Caco-2 (cell line): ENCODE measurements at regions of chr9 and their contacts with region 1.

Region 1: DNA sequence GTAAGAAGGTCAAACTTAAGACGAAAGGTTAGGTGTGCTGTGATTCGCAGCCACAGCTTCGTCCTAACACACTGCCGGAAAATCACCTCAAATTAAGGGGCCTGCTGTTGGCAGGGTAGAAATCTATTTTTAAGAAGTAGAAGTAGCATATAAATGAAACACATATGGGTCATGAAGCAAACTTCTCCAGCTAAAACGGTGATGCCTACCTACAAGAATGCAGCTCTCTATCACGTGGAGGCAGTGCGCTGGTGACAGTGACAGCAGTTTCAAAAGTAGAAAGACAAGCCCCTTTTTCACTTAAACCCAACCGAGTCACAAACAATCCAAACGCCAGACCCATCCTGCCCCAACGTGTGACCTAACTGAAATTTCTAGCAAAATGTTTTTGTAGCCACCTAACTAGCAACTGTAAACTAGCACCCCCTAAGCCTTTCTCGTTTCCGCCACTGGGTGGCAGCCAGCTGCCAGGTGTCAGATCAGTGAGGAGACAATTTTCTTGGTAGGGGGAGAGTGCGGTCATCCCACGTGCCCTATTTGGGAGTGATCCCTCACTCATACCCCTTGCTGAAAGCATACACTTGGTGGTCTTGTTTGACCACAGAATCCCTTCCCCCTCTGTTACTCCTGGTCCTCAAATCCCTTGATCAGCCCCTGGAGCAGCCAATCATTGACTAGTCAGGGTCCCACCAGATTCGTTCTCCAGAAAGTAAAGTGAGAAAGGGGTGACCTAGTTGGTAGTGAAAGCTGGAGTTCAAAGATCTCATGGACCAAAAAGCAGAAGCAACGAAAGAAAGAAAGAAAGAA is 71.8 kb upstream of the MAMDC2 start:
- DNase-seq: peak; percentile 25 to 39
- H3K4me3 ChIP-seq: no peak overlapping the region
- H3K4me3 Mint-ChIP-seq: no peak overlapping the region
- H3K27ac Mint-ChIP-seq: no peak overlapping the region
- H3K4me1 ChIP-seq: no peaks in the 10 kb centered on the region
- H3K4me1 Mint-ChIP-seq: no peaks in the 10 kb centered on the region
- H3K27me3 ChIP-seq: no peaks in the 10 kb centered on the region
- H3K27me3 Mint-ChIP-seq: no peaks in the 10 kb centered on the region
- CTCF ChIP-seq: peak; percentile 18 to 55

Region 2: GRCh38 chr9:70060883-70061507 is 89.1 kb after region 1 on chr9:
- CTCF ChIA-PET with region 1: no interaction called
- POLR2A ChIA-PET with region 1: no interaction called
- intact Hi-C with region 1: no loop called
- DNase-seq: no peak
- H3K4me3 ChIP-seq: no peak overlapping the region
- H3K4me3 Mint-ChIP-seq: no peak overlapping the region
- H3K27ac Mint-ChIP-seq: no peak overlapping the region
- H3K4me1 ChIP-seq: no peaks in the 10 kb centered on the region
- H3K4me1 Mint-ChIP-seq: no peaks in the 10 kb centered on the region
- H3K27me3 ChIP-seq: no peaks in the 10 kb centered on the region
- H3K27me3 Mint-ChIP-seq: no peaks in the 10 kb centered on the region
- CTCF ChIP-seq: no peak

Region 3: DNA sequence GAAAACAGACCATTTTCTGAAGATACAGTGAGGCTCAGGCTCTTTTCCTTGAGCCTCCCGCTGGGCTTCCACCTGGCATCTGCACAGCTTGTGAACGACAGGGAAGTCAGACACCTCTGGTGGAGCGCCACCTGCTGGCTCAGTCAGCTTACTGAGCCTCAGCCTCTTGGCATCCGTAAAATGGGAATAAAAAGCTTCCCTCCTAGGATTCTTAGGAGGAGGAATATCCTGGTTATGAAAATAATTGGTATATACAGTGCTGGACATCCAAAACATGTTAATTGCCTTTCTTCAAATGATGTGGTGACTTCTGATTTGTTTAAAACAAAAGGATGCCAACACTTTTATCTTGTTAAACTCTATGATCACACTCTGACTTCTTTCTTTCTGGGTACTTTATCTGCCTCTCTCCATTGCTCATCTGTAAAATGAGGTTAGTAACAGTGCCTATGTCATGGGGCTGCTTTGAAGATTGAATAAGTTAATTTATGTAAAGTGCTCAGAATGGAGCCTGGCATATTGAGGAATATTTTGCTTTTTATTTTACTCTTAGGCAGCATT is 139.3 kb after region 1 on chr9:
- CTCF ChIA-PET with region 1: interaction called, 4 read pairs
- POLR2A ChIA-PET with region 1: no interaction called
- intact Hi-C with region 1: loop called (anchors 2 kb)
- DNase-seq: peak; percentile 20 to 34
- H3K4me3 ChIP-seq: no peak overlapping the region
- H3K4me3 Mint-ChIP-seq: no peak overlapping the region
- H3K27ac Mint-ChIP-seq: no peak overlapping the region
- H3K4me1 ChIP-seq: no peaks in the 10 kb centered on the region
- H3K4me1 Mint-ChIP-seq: no peaks in the 10 kb centered on the region
- H3K27me3 ChIP-seq: no peaks in the 10 kb centered on the region
- H3K27me3 Mint-ChIP-seq: peaks cover 7% of the 10 kb centered on the region
- CTCF ChIP-seq: peak in 1 of 2 experiments; percentile 26

Region 4: GRCh38 chr9:70602321-70603019 is 630.6 kb after region 1 on chr9:
- CTCF ChIA-PET with region 1: no interaction called
- POLR2A ChIA-PET with region 1: no interaction called
- intact Hi-C with region 1: loop called (anchors 5 kb)
- DNase-seq: peak; percentile 18 to 26
- H3K4me3 ChIP-seq: no peak overlapping the region
- H3K4me3 Mint-ChIP-seq: no peak overlapping the region
- H3K27ac Mint-ChIP-seq: no peak overlapping the region
- H3K4me1 ChIP-seq: no peaks in the 10 kb centered on the region
- H3K4me1 Mint-ChIP-seq: no peaks in the 10 kb centered on the region
- H3K27me3 ChIP-seq: no peaks in the 10 kb centered on the region
- H3K27me3 Mint-ChIP-seq: peaks cover 3% of the 10 kb centered on the region
- CTCF ChIP-seq: peak; percentile 32 to 41